MCF 10A (cell line): ENCODE measurements at regions of chr5 and their contacts with region 1.

Region 1: GRCh38 chr5:173293817-173294672 is 34.2 kb downstream of the STC2 start:
- DNase-seq: peak; percentile 94
- H3K4me3 Mint-ChIP-seq: peak overlapping the region; percentile 9
- H3K27ac Mint-ChIP-seq: peak overlapping the region; percentile 24
- H3K4me1 Mint-ChIP-seq: peaks cover 21% of the 10 kb centered on the region
- H3K27me3 Mint-ChIP-seq: no peaks in the 10 kb centered on the region
- CTCF ChIP-seq: peak; percentile 93

Region 2: GRCh38 chr5:172697123-172698121 is 596.6 kb before region 1 on chr5:
- CTCF ChIA-PET with region 1: no interaction called
- POLR2A ChIA-PET with region 1: no interaction called
- intact Hi-C with region 1: no loop called
- DNase-seq: peak; percentile 94
- H3K4me3 Mint-ChIP-seq: peak overlapping the region; percentile 82
- H3K27ac Mint-ChIP-seq: peak overlapping the region; percentile 82
- H3K4me1 Mint-ChIP-seq: peaks cover 17% of the 10 kb centered on the region
- H3K27me3 Mint-ChIP-seq: peaks cover 14% of the 10 kb centered on the region
- CTCF ChIP-seq: peak; percentile 99

Region 3: DNA sequence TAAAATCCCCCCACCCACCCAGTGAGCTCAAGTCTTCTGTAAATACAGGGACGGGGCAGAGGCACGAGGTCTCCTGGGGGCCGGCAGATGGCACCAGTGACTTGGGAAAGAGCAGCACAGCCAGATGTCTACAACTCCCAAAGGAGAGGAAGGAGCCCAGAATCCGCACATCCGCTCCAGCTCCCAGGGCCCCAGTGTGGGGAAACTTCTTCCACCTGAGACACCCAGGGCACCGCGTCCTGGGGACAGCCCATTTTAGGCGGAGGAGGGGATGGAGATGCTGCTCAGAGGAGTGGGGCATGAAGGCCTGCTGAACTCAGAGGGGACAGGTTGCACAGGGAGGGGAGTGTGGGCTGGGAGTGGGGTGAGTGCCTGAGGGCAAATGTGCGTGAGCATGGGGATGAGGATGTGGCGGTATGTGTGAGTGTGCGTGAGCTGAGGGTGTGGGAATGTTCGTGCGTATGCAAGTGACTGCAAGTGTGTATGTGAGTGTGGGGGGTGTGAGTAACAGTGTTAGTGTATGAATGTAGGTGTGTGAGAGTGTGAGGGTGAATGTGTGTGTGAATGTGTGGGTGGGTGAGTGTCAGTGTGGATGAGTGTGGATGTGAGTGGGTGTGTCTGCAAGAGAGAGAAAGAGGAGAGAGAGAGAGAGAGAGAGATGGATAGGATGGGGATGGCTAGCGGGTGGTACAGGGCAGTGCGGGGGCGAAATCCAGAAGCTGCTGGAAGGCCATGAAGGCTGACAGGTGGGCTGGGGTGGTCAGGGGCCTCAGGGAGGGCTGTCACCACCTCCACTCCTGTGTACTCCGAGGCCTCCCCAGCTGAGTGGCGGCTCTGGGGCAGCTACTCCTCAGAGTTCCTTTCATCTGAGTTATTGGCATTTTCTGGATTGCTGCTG is 586.5 kb before region 1 on chr5:
- CTCF ChIA-PET with region 1: interaction called, 14 read pairs
- POLR2A ChIA-PET with region 1: interaction called, 3 read pairs
- intact Hi-C with region 1: no loop called
- DNase-seq: peak; percentile 89
- H3K4me3 Mint-ChIP-seq: no peak overlapping the region
- H3K27ac Mint-ChIP-seq: no peak overlapping the region
- H3K4me1 Mint-ChIP-seq: peaks cover 7% of the 10 kb centered on the region
- H3K27me3 Mint-ChIP-seq: no peaks in the 10 kb centered on the region
- CTCF ChIP-seq: peak; percentile 88

Region 4: DNA sequence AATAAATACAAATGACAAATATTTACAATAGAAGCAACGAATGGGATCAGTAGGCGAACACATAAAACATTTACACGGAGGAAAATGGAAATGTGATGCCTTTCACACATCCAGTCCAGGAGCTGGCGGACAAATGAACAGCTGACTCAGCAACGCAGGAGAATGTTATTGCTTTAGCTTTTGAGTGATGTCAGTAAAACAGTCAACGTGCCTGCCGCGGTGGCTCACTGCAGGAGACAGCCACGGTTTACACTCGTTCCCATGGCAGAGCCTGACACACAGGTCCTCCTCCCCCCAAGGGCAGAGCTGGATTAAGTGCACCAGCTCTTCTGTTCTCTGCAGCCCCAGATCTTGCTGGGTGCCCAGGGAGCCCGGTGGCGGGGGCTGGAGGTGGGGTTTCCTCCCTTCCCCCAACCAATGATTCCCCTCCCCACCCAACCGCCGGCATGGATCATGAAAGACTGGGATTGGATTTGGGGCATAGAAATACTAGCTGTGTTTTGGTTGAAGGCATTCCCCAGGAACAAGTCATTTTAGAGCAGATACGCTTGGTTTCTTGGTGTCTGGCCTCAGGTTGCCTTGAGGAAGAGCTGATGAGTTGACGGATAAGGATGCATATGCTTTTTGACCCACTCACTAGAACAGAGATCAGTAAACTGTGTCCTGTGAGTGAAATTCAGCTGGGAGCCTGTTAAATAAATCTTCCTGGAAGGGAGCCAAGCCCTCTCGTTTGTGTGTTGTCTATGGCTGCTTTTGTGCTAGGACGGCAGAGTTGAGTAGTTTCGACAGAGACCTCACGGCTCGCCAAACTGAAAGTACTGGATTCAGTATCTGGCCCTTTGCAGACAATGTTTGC is 21.7 kb after region 1 on chr5:
- CTCF ChIA-PET with region 1: interaction called, 25 read pairs
- POLR2A ChIA-PET with region 1: interaction called, 7 read pairs
- intact Hi-C with region 1: no loop called
- DNase-seq: peak; percentile 43
- H3K4me3 Mint-ChIP-seq: no peak overlapping the region
- H3K27ac Mint-ChIP-seq: peak overlapping the region; percentile 10
- H3K4me1 Mint-ChIP-seq: peaks cover 17% of the 10 kb centered on the region
- H3K27me3 Mint-ChIP-seq: no peaks in the 10 kb centered on the region
- CTCF ChIP-seq: no peak

Region 5: GRCh38 chr5:173472141-173472543 is 178.1 kb after region 1 on chr5:
- CTCF ChIA-PET with region 1: no interaction called
- POLR2A ChIA-PET with region 1: no interaction called
- intact Hi-C with region 1: no loop called
- DNase-seq: peak; percentile 97
- H3K4me3 Mint-ChIP-seq: peak overlapping the region; percentile 47
- H3K27ac Mint-ChIP-seq: peak overlapping the region; percentile 94
- H3K4me1 Mint-ChIP-seq: peaks cover 51% of the 10 kb centered on the region
- H3K27me3 Mint-ChIP-seq: no peaks in the 10 kb centered on the region
- CTCF ChIP-seq: no peak

Region 6: GRCh38 chr5:173567574-173567973 is 273.5 kb after region 1 on chr5:
- CTCF ChIA-PET with region 1: interaction called, 184 read pairs
- POLR2A ChIA-PET with region 1: interaction called, 16 read pairs
- intact Hi-C with region 1: no loop called
- DNase-seq: peak; percentile 93
- H3K4me3 Mint-ChIP-seq: no peak overlapping the region
- H3K27ac Mint-ChIP-seq: peak overlapping the region; percentile 20
- H3K4me1 Mint-ChIP-seq: peaks cover 21% of the 10 kb centered on the region
- H3K27me3 Mint-ChIP-seq: no peaks in the 10 kb centered on the region
- CTCF ChIP-seq: no peak

Region 7: GRCh38 chr5:173984218-173984617 is 690.2 kb after region 1 on chr5:
- CTCF ChIA-PET with region 1: no interaction called
- POLR2A ChIA-PET with region 1: no interaction called
- intact Hi-C with region 1: loop called (anchors 5 kb)
- DNase-seq: peak; percentile 44
- H3K4me3 Mint-ChIP-seq: no peak overlapping the region
- H3K27ac Mint-ChIP-seq: no peak overlapping the region
- H3K4me1 Mint-ChIP-seq: no peaks in the 10 kb centered on the region
- H3K27me3 Mint-ChIP-seq: peaks cover 19% of the 10 kb centered on the region
- CTCF ChIP-seq: peak; percentile 59